Common myeloid progenitor, CD34-positive (primary cell): ENCODE measurements at regions of chr1 and their contacts with region 1.

Region 1: DNA sequence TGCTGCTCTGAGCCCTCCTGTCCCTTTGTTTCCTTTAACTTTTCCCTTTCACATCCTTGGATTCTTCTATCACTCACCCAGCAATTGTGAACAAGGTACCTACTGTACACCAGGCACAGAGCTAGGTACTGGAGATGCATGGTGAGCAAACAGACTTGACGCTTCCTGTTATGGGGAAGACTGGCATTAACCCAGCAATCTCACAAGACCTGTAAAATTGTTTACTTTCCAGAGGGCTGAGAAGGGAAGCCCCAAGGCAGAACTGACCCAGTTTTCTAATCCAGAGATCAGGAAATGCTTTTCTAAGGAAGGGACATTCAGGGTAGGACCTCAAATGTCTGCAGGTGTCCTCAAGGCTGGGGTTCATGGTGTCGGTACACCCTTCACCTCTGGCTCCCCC is 171.6 kb upstream of the KAZN start:
- DNase-seq: no peak
- H3K4me3 ChIP-seq: no peak overlapping the region
- H3K27ac ChIP-seq: no peak overlapping the region
- H3K4me1 ChIP-seq: no peaks in the 10 kb centered on the region
- H3K27me3 ChIP-seq: peaks cover 0 to 3% (median 0%) of the 10 kb centered on the region in 5 experiments

Region 2: DNA sequence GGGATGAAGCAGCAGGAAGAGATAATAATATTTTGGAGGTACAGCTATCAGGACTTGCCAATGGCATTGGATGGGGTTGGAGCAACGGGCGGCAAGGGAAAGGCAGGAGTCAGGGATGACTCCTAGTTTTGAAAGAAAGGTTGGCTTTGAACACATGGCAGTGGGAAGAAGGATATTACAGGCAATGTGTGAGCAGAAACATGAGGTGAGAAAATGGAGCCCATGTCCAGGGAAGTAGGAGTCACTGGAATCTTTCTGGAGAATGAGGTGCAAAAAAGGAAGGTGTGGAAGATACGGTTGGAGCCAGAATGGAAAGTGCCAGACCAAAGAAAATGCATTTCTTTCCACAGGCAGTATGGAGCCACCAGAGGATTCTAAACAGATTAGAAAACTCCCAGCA is 116.9 kb before region 1 on chr1:
- CTCF ChIA-PET with region 1: no interaction called
- POLR2A ChIA-PET with region 1: interaction called, 11 read pairs
- DNase-seq: no peak
- H3K4me3 ChIP-seq: no peak overlapping the region
- H3K27ac ChIP-seq: no peak overlapping the region
- H3K4me1 ChIP-seq: no peaks in the 10 kb centered on the region
- H3K27me3 ChIP-seq: peaks cover 0 to 2% (median 0%) of the 10 kb centered on the region in 5 experiments

Region 3: DNA sequence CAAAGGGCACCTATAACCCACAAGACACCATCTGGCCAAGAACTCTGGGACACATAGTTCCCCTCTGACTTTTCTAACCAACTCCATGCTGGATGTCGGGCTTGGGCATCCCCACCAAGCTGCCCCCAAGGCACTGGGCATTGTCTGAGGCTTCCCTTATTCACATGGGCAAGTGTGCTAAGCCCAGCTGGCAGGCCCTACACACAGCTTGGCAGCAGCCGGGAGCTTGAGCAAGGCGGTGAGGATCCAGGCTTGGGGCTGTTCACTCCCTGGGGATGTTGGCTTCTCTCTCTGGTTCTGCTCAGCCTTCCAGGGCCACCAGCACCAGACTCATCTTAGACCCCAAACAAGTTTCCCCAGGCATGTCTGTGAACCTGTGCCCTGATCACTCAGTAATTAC is 33.3 kb after region 1 on chr1:
- CTCF ChIA-PET with region 1: no interaction called
- POLR2A ChIA-PET with region 1: no interaction called
- DNase-seq: no peak
- H3K4me3 ChIP-seq: no peak overlapping the region
- H3K27ac ChIP-seq: no peak overlapping the region
- H3K4me1 ChIP-seq: no peaks in the 10 kb centered on the region
- H3K27me3 ChIP-seq: peaks cover 0 to 2% (median 0%) of the 10 kb centered on the region in 5 experiments

Region 4: DNA sequence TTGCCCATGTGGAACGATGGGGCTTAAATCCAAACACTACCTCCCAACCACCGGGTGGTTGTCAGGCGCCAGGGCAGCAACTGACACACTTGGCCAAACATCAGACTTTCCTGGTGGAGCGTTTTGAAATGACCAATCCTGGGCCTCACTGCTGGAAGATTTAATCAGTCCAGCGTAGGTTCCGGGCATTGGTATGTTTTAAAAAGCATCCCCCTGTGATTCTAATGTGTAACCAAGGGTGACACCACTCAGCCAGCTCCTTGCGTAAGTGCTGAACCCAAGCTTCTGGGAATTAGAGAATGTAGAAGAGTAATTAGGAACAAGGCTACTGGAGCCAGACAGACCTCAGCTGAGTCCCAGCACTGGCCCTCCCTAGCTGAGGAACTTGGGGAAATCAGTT is 126.9 kb after region 1 on chr1:
- CTCF ChIA-PET with region 1: no interaction called
- POLR2A ChIA-PET with region 1: no interaction called
- DNase-seq: no peak
- H3K4me3 ChIP-seq: no peak overlapping the region
- H3K27ac ChIP-seq: no peak overlapping the region
- H3K4me1 ChIP-seq: no peaks in the 10 kb centered on the region
- H3K27me3 ChIP-seq: peaks cover 5 to 44% (median 10%) of the 10 kb centered on the region in 5 experiments